ENCODE measurements at regions of chr19 and their contacts with region 1.

Region 1: DNA sequence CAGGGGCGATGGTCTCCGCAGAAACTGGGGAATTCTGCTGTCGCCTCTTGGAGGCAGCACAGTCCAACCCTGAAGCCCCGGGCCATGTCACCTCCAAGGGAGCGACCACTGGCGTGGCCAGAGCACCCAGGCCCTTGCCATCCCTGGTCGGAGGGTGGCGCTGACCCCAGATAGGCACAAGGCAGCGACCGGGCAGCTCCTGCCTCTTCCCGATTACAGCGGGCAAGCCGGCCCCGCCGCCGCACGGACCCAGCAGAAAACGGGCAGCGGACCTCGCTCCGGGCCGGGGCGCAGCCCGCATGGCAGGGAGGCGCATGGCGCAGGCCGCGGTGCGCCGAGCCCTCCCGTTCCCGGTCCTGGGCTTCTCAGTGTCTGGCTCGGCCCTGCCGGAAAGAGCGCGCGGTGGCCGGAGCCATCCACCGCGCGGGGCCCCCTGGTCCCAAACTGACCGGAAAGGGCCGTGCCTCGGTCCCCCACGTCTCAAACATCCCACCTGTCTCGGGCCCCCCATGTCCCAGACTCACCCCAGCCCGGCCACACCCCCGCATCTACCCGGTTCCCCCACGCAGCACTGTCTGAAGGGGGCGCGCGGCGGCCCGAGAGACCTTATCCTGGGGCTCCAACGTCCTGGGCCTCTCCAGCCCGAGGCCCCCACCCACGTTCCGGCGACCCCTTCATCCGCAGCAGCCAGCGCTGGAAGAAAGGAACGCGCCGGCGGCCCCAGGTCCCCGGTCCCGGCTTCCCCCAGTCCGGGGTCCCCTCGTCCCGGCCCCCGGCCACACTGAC is 727 bp downstream of the CERS1 start:
- DNase-seq: peak in 1 of 2 experiments; percentile 80
- H3K4me3 ChIP-seq: peak overlapping the region; percentile 42 to 79 (median 62)
- H3K27ac ChIP-seq: no peak overlapping the region
- H3K4me1 ChIP-seq: peaks cover 0 to 13% (median 5%) of the 10 kb centered on the region in 4 experiments; a peak in 5 of 7 replicates
- H3K27me3 ChIP-seq: peaks cover 0 to 13% (median 8%) of the 10 kb centered on the region in 4 experiments; a peak in 4 of 7 replicates
- CTCF ChIP-seq: peak; percentile 66 to 78 (median 74)
- EP300 ChIP-seq: no peak
- POLR2A ChIP-seq: no peak
- RAD21 ChIP-seq: peak; percentile 59 to 73

Region 2: DNA sequence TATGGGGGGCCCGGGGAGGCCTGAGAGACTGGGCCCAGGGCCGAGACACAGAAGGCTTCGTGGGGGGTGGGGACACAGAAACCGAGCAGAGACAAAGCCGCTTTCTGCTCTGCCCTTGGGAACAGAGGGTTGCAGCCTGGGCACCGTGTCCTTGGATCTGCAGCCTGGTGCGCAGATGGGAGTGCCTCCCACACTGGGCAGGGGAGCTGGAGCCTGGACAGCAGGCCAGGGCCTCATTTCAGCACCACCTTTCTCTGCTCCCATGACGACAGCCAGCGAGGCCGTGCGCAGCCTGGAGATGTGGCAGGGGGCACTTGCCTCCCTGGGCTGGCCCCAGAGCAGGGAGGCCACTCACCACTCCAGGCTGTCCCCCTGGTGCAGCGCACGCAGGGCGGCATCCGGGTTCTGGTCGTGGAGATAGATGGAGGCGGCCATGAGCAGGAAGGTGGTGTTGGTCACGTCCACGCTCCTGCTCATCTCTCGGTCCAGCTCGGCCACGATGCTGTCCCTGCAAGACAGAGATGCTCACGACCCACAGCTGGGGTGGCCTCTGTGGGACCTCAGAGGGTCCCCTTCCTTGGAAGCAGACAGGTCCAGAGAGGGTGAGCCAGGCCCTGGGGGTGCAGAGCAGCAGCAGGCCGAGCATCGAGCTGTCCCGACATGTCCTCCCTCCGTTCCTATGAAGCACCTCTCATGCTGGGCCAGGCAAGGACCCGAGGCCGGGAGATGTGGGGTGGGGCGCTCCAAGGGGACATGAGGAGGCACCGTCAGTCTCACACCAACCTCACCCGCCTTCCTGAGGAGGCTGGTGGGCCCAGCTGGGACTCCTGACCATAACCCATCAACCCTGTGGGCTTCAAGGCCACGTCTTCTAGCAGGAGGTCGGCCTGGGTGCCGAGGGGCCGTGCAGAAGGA is 11.6 kb after region 1 on chr19:
- CTCF ChIA-PET with region 1: interaction called, 34 read pairs
- POLR2A ChIA-PET with region 1: interaction called, 7 read pairs
- DNase-seq: no peak
- H3K4me3 ChIP-seq: no peak overlapping the region
- H3K27ac ChIP-seq: no peak overlapping the region
- H3K4me1 ChIP-seq: no peaks in the 10 kb centered on the region
- H3K27me3 ChIP-seq: no peaks in the 10 kb centered on the region
- CTCF ChIP-seq: no peak
- EP300 ChIP-seq: no peak
- POLR2A ChIP-seq: no peak
- RAD21 ChIP-seq: no peak

Region 3: GRCh38 chr19:18912933-18913332 is 17.7 kb after region 1 on chr19:
- CTCF ChIA-PET with region 1: interaction called, 34 read pairs
- POLR2A ChIA-PET with region 1: interaction called, 17 read pairs
- DNase-seq: no peak
- H3K4me3 ChIP-seq: no peak overlapping the region
- H3K27ac ChIP-seq: no peak overlapping the region
- H3K4me1 ChIP-seq: no peaks in the 10 kb centered on the region
- H3K27me3 ChIP-seq: no peaks in the 10 kb centered on the region
- CTCF ChIP-seq: no peak
- EP300 ChIP-seq: no peak
- POLR2A ChIP-seq: no peak
- RAD21 ChIP-seq: no peak

Region 4: DNA sequence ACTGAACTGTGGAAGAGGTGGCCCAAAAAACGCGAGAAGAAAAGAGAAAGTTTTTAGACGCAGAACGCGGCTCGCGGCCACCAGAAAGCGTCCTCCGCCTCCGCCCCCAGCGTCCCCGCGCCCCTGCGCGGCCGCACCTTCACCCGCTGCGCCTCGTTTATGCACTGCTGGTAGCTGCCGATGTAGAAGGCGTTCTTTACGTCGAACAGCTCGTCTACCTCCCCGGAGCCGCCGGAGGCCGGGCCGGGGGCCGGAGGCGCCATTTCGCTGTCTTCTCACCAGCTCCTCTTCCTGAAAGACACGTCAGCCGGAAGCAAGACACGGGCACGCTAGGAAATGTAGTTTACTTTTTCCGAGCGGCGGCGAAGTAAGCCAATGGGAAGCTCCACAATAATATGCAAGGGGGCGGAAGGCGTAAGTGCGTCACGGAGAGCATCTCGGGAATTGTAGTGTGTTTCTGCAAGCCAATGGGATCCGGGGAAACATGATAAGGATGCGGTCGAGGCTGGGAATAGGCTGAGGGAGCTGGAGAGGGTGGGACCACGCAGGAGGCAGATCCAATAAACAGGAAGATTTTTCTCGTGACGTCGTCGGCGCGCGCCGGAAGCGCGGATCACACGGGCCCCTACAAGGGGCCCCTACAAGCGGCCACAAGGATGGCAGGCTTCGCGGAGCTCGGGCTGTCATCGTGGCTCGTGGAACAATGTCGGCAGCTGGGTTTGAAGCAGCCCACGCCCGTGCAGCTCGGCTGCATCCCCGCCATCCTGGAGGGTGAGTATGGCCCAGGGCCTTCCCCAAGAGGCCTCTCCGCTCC is 24.1 kb after region 1 on chr19 and contains the starts of genes COPE and DDX49:
- CTCF ChIA-PET with region 1: interaction called, 11 read pairs
- POLR2A ChIA-PET with region 1: interaction called, 17 read pairs
- DNase-seq: peak; percentile 97
- H3K4me3 ChIP-seq: peak within 1 kb of the TSS; percentile 82 to 100 (median 100)
- H3K27ac ChIP-seq: peak within 1 kb of the TSS; percentile 64
- H3K4me1 ChIP-seq: peaks cover 0 to 9% (median 6%) of the 10 kb centered on the region in 4 experiments; a peak in 6 of 7 replicates
- H3K27me3 ChIP-seq: no peaks in the 10 kb centered on the region
- CTCF ChIP-seq: no peak; a peak in 1 of 4 replicates
- EP300 ChIP-seq: no peak
- POLR2A ChIP-seq: peak in 1 of 2 experiments; percentile 97; a peak in 2 of 3 replicates
- RAD21 ChIP-seq: no peak
- total RNA-seq, gene COPE: 178 and 190 TPM in 2 replicates
- total RNA-seq, gene DDX49: 41.3 and 52.3 TPM in 2 replicates

Measured in H1 (cell line).